B cell (primary cell): ENCODE measurements at regions of chr6 and their contacts with region 1.

Region 1: GRCh38 chr6:158793432-158793831 is 25.7 kb downstream of the EZR start:
- DNase-seq: peak; percentile 68
- ATAC-seq: peak; percentile 35
- H3K4me3 ChIP-seq: no peak overlapping the region
- H3K4me3 Mint-ChIP-seq: peak overlapping the region; percentile 54
- H3K27ac ChIP-seq: peak overlapping the region; percentile 40 to 54
- H3K27ac Mint-ChIP-seq: peak overlapping the region; percentile 61
- H3K4me1 ChIP-seq: peaks cover 91 to 92% of the 10 kb centered on the region in 2 donors
- H3K4me1 Mint-ChIP-seq: peaks cover 91% of the 10 kb centered on the region
- H3K27me3 ChIP-seq: no peaks in the 10 kb centered on the region
- H3K27me3 Mint-ChIP-seq: no peaks in the 10 kb centered on the region
- CTCF ChIP-seq: peak; percentile 68

Region 2: DNA sequence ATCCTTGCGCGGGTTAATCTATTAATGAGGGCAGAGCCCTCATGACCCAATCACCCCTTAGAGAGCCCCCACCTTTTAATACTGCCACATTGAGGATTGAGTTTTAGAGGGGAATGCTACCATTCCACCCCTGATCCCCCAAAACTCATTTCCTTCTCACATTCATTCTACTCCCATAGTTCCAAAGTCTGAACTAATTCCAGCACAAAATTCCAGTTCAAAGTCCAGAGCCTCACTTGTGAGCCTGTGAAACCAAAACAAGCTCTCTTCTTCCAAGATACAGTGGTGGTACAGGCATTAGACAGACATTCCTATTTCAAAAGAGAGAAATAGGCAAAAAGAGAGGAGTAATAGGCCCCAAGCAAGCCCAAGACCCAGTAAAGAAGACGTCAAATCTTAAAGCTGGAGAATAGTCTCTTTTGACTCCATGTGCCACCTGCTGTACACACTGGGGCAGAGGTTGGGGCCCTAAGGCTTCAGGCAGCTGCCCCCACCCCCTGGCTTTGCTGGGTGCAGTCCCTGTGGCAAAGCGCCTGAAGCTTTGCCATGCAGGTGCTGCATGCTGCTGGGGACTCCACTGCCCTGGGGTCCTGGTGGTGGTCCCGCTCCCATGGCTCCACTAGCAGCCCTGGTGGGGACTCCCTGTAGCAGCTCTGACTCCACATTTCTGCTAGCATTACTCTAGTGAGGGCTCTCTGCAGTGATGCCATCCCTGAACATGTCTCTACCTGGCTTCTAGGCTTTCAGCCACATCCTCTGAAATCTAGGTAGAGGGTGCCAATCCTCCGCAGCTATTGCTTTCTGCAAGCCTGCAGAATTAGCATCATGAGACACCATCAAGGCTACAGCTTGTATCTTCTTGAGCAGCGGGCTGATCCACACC is 165.3 kb after region 1 on chr6:
- CTCF ChIA-PET with region 1: interaction called, 24 read pairs
- POLR2A ChIA-PET with region 1: interaction called, 14 read pairs
- intact Hi-C with region 1: loop called (anchors 1 kb)
- DNase-seq: peak; percentile 71
- ATAC-seq: peak; percentile 82
- H3K4me3 ChIP-seq: no peak overlapping the region
- H3K4me3 Mint-ChIP-seq: no peak overlapping the region
- H3K27ac ChIP-seq: no peak overlapping the region
- H3K27ac Mint-ChIP-seq: peak overlapping the region; percentile 69
- H3K4me1 ChIP-seq: peaks cover 5 to 10% of the 10 kb centered on the region in 2 donors
- H3K4me1 Mint-ChIP-seq: peaks cover 23% of the 10 kb centered on the region
- H3K27me3 ChIP-seq: no peaks in the 10 kb centered on the region
- H3K27me3 Mint-ChIP-seq: no peaks in the 10 kb centered on the region
- CTCF ChIP-seq: peak; percentile 42

Region 3: GRCh38 chr6:159042003-159042825 is 248.8 kb after region 1 on chr6:
- CTCF ChIA-PET with region 1: no interaction called
- POLR2A ChIA-PET with region 1: no interaction called
- intact Hi-C with region 1: no loop called
- DNase-seq: peak; percentile 93
- ATAC-seq: peak; percentile 44
- H3K4me3 ChIP-seq: peak overlapping the region; percentile 72 to 100 (median 93)
- H3K4me3 Mint-ChIP-seq: peak overlapping the region; percentile 100
- H3K27ac ChIP-seq: peak overlapping the region; percentile 98 to 99
- H3K27ac Mint-ChIP-seq: peak overlapping the region; percentile 99
- H3K4me1 ChIP-seq: peaks cover 61 to 67% of the 10 kb centered on the region in 2 donors
- H3K4me1 Mint-ChIP-seq: peaks cover 72% of the 10 kb centered on the region
- H3K27me3 ChIP-seq: no peaks in the 10 kb centered on the region
- H3K27me3 Mint-ChIP-seq: no peaks in the 10 kb centered on the region
- CTCF ChIP-seq: peak; percentile 100